IMR-90 (cell line): ENCODE measurements at regions of chr4 and their contacts with region 1.

Region 1: DNA sequence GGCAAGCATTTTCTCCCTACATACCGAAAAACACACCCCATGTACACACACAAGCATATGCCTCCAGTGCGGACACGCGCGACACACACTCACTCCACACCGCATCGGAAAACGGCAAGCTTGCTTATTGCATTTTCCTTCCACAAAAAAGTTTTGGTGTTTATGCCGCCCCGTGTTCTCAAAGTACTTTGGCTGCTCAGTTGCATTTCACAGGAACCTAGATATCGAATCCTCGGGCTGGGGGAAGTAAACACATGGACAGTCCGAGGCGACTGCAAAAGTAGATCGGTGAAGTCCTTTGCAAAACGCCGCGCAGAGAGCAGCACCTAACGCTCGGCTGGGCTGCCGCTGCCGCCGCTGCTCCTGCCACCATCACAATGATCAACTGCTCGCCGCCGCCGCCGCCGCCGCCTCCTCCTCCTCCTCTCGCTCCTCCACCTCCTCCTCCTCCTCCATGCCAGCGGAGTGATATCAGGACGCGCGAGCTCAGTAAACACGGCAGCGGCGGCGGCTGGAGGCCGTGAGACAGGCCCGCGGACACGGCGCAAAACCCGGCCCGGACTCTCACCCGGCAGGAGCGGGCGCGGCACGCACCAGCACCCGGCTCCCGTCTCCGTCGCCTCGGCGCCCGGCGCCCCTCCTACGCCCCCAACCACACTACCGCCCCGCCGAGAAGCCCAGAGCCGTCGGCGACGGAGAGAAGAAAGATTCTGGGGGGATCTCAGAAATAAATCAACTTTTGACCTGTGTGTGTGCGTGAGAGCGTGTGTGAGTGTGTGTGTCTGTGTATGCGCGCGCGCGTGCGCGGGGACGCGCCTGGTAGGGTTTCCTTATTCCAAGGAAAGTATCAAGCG is at the start of gene MAML3:
- DNase-seq: peak; percentile 96
- ATAC-seq: peak; percentile 45
- H3K4me3 ChIP-seq: peak within 1 kb of the TSS; percentile 90
- H3K27ac ChIP-seq: peak within 1 kb of the TSS; percentile 97
- H3K4me1 ChIP-seq: peaks cover 3% of the 10 kb centered on the region; the same call in 1 of the 2 replicates
- H3K27me3 ChIP-seq: no peaks in the 10 kb centered on the region
- CTCF ChIP-seq: no peak
- POLR2A ChIP-seq: peak; percentile 62; the same call in 1 of the 2 replicates
- RAD21 ChIP-seq: peak; percentile 45
- total RNA-seq, gene MAML3: 0.90 and 1.1 TPM in 2 replicates

Region 2: DNA sequence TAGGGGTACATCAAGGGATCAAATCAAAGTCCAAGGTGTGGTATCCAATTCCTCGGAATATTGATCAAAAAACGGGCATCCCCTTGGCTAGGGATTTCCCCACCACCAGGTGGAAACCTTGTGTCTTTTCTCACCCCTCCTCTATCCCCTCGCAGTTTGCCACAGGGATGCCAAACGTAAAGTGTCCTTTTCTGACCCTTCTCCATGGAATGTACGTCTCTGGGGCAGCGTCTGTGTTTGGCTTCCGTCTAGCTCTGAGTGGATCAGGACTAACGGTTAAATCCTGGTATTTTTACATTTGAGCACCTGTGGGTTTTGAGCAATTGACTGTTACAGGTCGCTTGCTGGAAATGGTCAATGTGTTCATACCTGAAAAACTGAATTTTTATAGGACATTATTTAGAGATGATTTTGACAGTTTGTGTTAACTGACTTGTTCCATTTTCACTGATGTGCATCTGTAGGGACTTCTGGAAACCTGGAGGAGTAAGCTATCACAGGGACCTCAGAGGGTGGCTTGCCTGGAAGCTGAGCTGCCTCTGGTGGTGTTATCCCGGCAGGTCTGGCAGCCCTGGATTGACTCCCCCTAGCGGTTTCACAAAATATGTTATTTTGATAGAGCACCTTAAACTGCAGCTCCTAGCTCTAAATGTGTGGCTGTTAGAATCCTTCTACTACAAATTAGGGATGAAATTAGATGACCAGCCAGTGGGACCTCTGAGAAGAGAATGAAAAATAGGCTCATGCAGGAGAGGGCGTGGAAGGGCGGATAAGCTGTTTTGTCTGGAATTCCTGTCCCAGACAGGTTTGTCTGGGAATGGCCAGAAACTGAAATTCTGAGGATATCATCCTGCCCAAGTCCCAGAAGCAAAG is 497.1 kb before region 1 on chr4:
- CTCF ChIA-PET with region 1: no interaction called
- POLR2A ChIA-PET with region 1: interaction called, 3 read pairs
- dilution Hi-C with region 1: no loop called
- in situ Hi-C with region 1: no loop called
- intact Hi-C with region 1: loop called (anchors 2 kb)
- DNase-seq: peak; percentile 78
- ATAC-seq: peak; percentile 92
- H3K4me3 ChIP-seq: no peak overlapping the region
- H3K27ac ChIP-seq: peak overlapping the region; percentile 18; the same call in 1 of the 2 replicates
- H3K4me1 ChIP-seq: peaks cover 6% of the 10 kb centered on the region
- H3K27me3 ChIP-seq: no peaks in the 10 kb centered on the region
- CTCF ChIP-seq: peak; percentile 93
- POLR2A ChIP-seq: no peak
- RAD21 ChIP-seq: peak; percentile 52

Region 3: DNA sequence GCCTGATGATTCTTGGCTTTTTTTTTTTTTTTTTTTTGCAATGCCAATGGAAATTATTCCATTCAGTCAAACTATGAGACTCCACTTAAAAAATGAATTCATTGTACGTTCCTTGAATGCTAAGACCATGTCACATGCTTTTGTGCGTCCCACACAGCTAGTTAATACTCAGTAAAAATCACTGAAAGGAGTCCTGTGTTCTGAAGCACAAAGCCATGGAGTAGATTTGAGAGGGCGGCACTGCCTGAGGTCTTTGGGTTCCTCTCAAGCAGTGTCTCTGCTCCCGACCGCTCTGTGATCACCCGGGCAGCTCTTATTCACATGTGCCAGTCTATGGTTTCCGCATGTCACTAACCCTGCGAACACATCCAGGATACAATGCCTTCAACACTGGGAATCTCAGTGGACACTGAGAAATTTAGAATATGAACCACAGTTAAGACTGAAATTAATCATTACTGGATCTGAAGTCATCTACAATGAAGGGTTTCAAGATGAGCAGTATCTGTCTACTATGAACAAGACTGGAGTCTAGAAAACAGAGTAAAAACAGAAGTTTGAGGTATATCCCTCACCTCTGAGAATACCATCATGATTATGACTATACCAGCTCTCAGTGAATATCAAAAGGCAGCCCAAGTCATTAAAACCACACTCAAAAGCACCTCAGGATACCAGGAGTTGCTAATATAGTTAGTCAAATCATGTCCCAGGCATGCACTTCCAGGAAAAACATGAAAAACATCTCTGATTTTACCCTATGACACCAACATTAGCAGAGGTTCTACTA is 295.3 kb before region 1 on chr4:
- CTCF ChIA-PET with region 1: no interaction called
- POLR2A ChIA-PET with region 1: no interaction called
- dilution Hi-C with region 1: no loop called
- in situ Hi-C with region 1: no loop called
- intact Hi-C with region 1: no loop called
- DNase-seq: no peak
- ATAC-seq: no peak
- H3K4me3 ChIP-seq: no peak overlapping the region
- H3K27ac ChIP-seq: no peak overlapping the region
- H3K4me1 ChIP-seq: no peaks in the 10 kb centered on the region
- H3K27me3 ChIP-seq: no peaks in the 10 kb centered on the region
- CTCF ChIP-seq: no peak
- POLR2A ChIP-seq: no peak
- RAD21 ChIP-seq: no peak

Region 4: GRCh38 chr4:139901531-139902320 is 252.2 kb before region 1 on chr4:
- CTCF ChIA-PET with region 1: no interaction called
- POLR2A ChIA-PET with region 1: no interaction called
- dilution Hi-C with region 1: no loop called
- in situ Hi-C with region 1: no loop called
- intact Hi-C with region 1: loop called (anchors 5 kb)
- DNase-seq: peak; percentile 44
- ATAC-seq: peak; percentile 68
- H3K4me3 ChIP-seq: peak overlapping the region; percentile 38
- H3K27ac ChIP-seq: peak overlapping the region; percentile 26; the same call in 1 of the 2 replicates
- H3K4me1 ChIP-seq: peaks cover 4% of the 10 kb centered on the region
- H3K27me3 ChIP-seq: no peaks in the 10 kb centered on the region
- CTCF ChIP-seq: no peak
- POLR2A ChIP-seq: no peak
- RAD21 ChIP-seq: no peak

Region 5: DNA sequence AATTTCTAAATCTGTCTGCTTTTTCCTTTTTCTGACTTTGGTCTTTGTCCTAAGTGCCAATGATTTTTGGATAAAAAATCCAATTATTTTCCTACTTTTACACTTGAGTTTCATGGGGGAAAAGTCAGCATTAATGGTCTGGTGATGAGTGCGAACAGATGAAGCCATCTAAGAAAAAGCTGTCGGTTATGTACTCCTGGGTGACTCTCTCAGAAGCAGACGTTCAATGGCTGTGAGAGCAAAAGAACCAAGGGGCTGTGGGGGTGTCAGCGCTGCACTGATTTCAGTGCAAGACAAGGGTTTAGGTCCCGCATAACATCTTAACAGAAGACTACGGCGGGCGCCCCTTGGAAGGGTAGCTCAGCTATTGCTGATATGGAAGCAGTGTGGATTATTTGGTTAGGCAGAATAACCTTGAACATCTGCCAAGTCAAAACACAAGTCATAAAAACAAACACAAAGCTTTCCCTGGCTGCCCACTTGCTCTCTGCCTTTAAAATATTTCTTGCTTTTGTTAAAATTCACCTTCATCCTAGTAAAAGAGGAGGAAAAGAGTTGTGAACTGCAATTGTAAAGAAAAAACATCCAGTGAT is 240.5 kb before region 1 on chr4:
- CTCF ChIA-PET with region 1: no interaction called
- POLR2A ChIA-PET with region 1: no interaction called
- dilution Hi-C with region 1: no loop called
- in situ Hi-C with region 1: no loop called
- intact Hi-C with region 1: no loop called
- DNase-seq: peak; percentile 51
- ATAC-seq: peak; percentile 38
- H3K4me3 ChIP-seq: no peak overlapping the region
- H3K27ac ChIP-seq: peak overlapping the region; percentile 93; the same call in 1 of the 2 replicates
- H3K4me1 ChIP-seq: peaks cover 12% of the 10 kb centered on the region
- H3K27me3 ChIP-seq: no peaks in the 10 kb centered on the region
- CTCF ChIP-seq: no peak
- POLR2A ChIP-seq: no peak
- RAD21 ChIP-seq: no peak

Region 6: GRCh38 chr4:140049024-140049848 is 104.7 kb before region 1 on chr4:
- CTCF ChIA-PET with region 1: no interaction called
- POLR2A ChIA-PET with region 1: no interaction called
- dilution Hi-C with region 1: no loop called
- in situ Hi-C with region 1: loop called (anchors 10 kb)
- intact Hi-C with region 1: loop called (anchors 1 kb)
- DNase-seq: peak; percentile 57
- ATAC-seq: peak; percentile 55
- H3K4me3 ChIP-seq: peak overlapping the region; percentile 34
- H3K27ac ChIP-seq: peak overlapping the region; percentile 79
- H3K4me1 ChIP-seq: peaks cover 12% of the 10 kb centered on the region
- H3K27me3 ChIP-seq: no peaks in the 10 kb centered on the region
- CTCF ChIP-seq: no peak
- POLR2A ChIP-seq: no peak
- RAD21 ChIP-seq: no peak

Region 7: GRCh38 chr4:140326395-140326993 is 172.5 kb after region 1 on chr4:
- CTCF ChIA-PET with region 1: interaction called, 3 read pairs
- POLR2A ChIA-PET with region 1: interaction called, 3 read pairs
- dilution Hi-C with region 1: no loop called
- in situ Hi-C with region 1: no loop called
- intact Hi-C with region 1: loop called (anchors 2 kb)
- DNase-seq: peak; percentile 65
- ATAC-seq: peak; percentile 85
- H3K4me3 ChIP-seq: no peak overlapping the region
- H3K27ac ChIP-seq: no peak overlapping the region
- H3K4me1 ChIP-seq: no peaks in the 10 kb centered on the region
- H3K27me3 ChIP-seq: no peaks in the 10 kb centered on the region
- CTCF ChIP-seq: peak; percentile 74
- POLR2A ChIP-seq: no peak
- RAD21 ChIP-seq: peak; percentile 84

Region 8: GRCh38 chr4:140851032-140851636 is 697.2 kb after region 1 on chr4:
- CTCF ChIA-PET with region 1: no interaction called
- POLR2A ChIA-PET with region 1: no interaction called
- dilution Hi-C with region 1: no loop called
- in situ Hi-C with region 1: no loop called
- intact Hi-C with region 1: loop called (anchors 5 kb)
- DNase-seq: peak; percentile 65
- ATAC-seq: peak; percentile 84
- H3K4me3 ChIP-seq: no peak overlapping the region
- H3K27ac ChIP-seq: no peak overlapping the region
- H3K4me1 ChIP-seq: no peaks in the 10 kb centered on the region
- H3K27me3 ChIP-seq: peaks cover 12% of the 10 kb centered on the region
- CTCF ChIP-seq: peak; percentile 89
- POLR2A ChIP-seq: no peak
- RAD21 ChIP-seq: peak; percentile 95